ENCODE measurements at regions of chr4 and their contacts with region 1.

Region 1: DNA sequence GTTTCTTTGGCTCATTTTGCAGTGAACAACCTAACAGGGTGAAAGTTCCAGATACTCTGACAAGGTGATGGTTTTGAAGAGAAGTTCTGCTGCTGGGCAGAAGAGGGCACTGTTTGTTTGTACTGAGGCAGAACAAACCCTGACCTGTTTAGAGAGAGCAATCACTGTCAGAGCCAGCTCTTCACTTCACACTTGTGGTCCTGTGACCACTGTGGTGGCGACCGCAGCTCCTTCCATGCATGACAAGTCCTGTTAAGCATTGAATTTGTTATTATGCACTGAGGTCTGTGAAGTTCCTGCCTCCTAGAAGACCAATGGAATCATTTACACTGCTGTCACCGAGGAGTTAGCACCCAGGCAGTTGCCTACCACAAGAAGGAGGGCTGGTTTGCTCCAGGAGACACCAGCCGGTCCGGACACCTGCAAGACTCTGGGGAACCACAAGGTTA is 86.6 kb downstream of the ZNF330 start:
- DNase-seq: peak; percentile 69
- H3K4me3 Mint-ChIP-seq: no peak overlapping the region
- H3K27ac Mint-ChIP-seq: peak overlapping the region; percentile 17
- H3K4me1 Mint-ChIP-seq: no peaks in the 10 kb centered on the region
- H3K27me3 Mint-ChIP-seq: no peaks in the 10 kb centered on the region
- CTCF ChIP-seq: peak; percentile 77

Region 2: GRCh38 chr4:141158219-141158618 is 149.0 kb before region 1 on chr4:
- CTCF ChIA-PET with region 1: interaction called, 6 read pairs
- POLR2A ChIA-PET with region 1: no interaction called
- intact Hi-C with region 1: loop called (anchors 2 kb)
- DNase-seq: peak; percentile 62
- H3K4me3 Mint-ChIP-seq: no peak overlapping the region
- H3K27ac Mint-ChIP-seq: no peak overlapping the region
- H3K4me1 Mint-ChIP-seq: peaks cover 6% of the 10 kb centered on the region
- H3K27me3 Mint-ChIP-seq: no peaks in the 10 kb centered on the region
- CTCF ChIP-seq: peak; percentile 69

Region 3: DNA sequence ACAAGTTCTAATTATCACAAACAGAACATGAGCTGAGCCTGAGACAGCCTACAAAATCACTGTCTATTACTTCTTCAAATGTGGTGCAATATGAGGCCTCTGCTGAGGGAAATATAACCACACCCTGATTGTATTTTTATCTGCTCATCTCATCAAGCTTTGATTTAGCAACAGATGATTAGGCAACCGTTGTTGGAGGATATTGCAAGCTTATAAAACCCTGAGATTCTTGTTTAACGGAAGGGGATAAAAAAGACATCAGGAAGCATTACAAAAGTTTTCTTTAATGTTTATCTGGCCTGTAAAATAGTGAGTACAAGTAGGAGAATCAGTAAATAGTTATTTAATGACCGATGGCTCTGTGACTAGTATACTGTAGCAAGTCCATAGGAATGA is 21.9 kb after region 1 on chr4:
- CTCF ChIA-PET with region 1: interaction called, 15 read pairs
- POLR2A ChIA-PET with region 1: no interaction called
- intact Hi-C with region 1: no loop called
- DNase-seq: peak; percentile 93
- H3K4me3 Mint-ChIP-seq: no peak overlapping the region
- H3K27ac Mint-ChIP-seq: peak overlapping the region; percentile 52
- H3K4me1 Mint-ChIP-seq: peaks cover 16% of the 10 kb centered on the region
- H3K27me3 Mint-ChIP-seq: no peaks in the 10 kb centered on the region
- CTCF ChIP-seq: no peak

Region 4: GRCh38 chr4:141702472-141703182 is 395.4 kb after region 1 on chr4:
- CTCF ChIA-PET with region 1: interaction called, 5 read pairs
- POLR2A ChIA-PET with region 1: no interaction called
- intact Hi-C with region 1: loop called (anchors 2 kb)
- DNase-seq: peak; percentile 22
- H3K4me3 Mint-ChIP-seq: no peak overlapping the region
- H3K27ac Mint-ChIP-seq: no peak overlapping the region
- H3K4me1 Mint-ChIP-seq: no peaks in the 10 kb centered on the region
- H3K27me3 Mint-ChIP-seq: no peaks in the 10 kb centered on the region
- CTCF ChIP-seq: no peak

Region 5: GRCh38 chr4:141711014-141711610 is 403.8 kb after region 1 on chr4:
- CTCF ChIA-PET with region 1: interaction called, 5 read pairs
- POLR2A ChIA-PET with region 1: no interaction called
- intact Hi-C with region 1: loop called (anchors 2 kb)
- DNase-seq: peak; percentile 49
- H3K4me3 Mint-ChIP-seq: no peak overlapping the region
- H3K27ac Mint-ChIP-seq: no peak overlapping the region
- H3K4me1 Mint-ChIP-seq: peaks cover 20% of the 10 kb centered on the region
- H3K27me3 Mint-ChIP-seq: no peaks in the 10 kb centered on the region
- CTCF ChIP-seq: peak; percentile 42

Measured in MCF 10A (cell line).